ENCODE measurements at regions of chr7 and their contacts with region 1.

Region 1: GRCh38 chr7:20598459-20599309 is 16.8 kb upstream of the ABCB5 start:
- DNase-seq: no peak
- ATAC-seq: peak; percentile 83 to 91 (median 84)
- H3K4me3 ChIP-seq: no peak overlapping the region
- H3K27ac ChIP-seq: no peak overlapping the region
- H3K4me1 ChIP-seq: no peaks in the 10 kb centered on the region
- H3K27me3 ChIP-seq: no peaks in the 10 kb centered on the region
- CTCF ChIP-seq: peak; percentile 79 to 85 (median 81)
- POLR2A ChIP-seq: no peak

Region 2: GRCh38 chr7:19747740-19748339 is 850.8 kb before region 1 on chr7:
- intact Hi-C with region 1: loop called in 1 of 2 experiments (anchors 10 kb)
- DNase-seq: no peak
- ATAC-seq: peak; percentile 70 to 74 (median 72)
- H3K4me3 ChIP-seq: no peak overlapping the region
- H3K27ac ChIP-seq: no peak overlapping the region
- H3K4me1 ChIP-seq: no peaks in the 10 kb centered on the region
- H3K27me3 ChIP-seq: no peaks in the 10 kb centered on the region
- CTCF ChIP-seq: peak; percentile 51 to 68 (median 60)
- POLR2A ChIP-seq: no peak

Region 3: GRCh38 chr7:20484356-20484755 is 114.3 kb before region 1 on chr7:
- intact Hi-C with region 1: no loop called
- DNase-seq: no peak
- ATAC-seq: no peak
- H3K4me3 ChIP-seq: no peak overlapping the region
- H3K27ac ChIP-seq: no peak overlapping the region
- H3K4me1 ChIP-seq: no peaks in the 10 kb centered on the region
- H3K27me3 ChIP-seq: no peaks in the 10 kb centered on the region
- CTCF ChIP-seq: no peak
- POLR2A ChIP-seq: no peak

Region 4: DNA sequence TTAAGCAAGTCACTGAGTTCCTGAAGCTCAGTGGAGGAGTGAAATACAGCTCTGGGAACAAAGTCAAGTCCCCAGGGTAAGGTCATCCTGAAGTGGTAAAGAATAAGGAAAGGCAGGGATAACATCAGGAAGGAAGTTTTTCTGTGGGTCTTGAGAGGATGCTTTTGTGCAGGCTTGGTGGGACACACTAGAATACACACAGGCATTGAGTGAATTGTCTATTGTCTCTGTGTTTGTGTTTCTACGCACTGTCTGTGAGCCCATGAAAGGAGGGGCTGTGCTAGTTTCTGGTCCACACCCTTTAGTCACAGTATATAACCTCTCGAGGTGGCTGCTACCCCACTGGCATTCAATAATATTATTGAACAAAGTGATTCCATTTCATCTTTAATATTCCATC is 79.0 kb before region 1 on chr7:
- intact Hi-C with region 1: no loop called
- DNase-seq: no peak
- ATAC-seq: no peak
- H3K4me3 ChIP-seq: no peak overlapping the region
- H3K27ac ChIP-seq: no peak overlapping the region
- H3K4me1 ChIP-seq: no peaks in the 10 kb centered on the region
- H3K27me3 ChIP-seq: no peaks in the 10 kb centered on the region
- CTCF ChIP-seq: no peak
- POLR2A ChIP-seq: no peak

Measured in right lobe of liver (tissue), 6 donors.